MCF 10A (cell line): ENCODE measurements at regions of chr1 and their contacts with region 1.

Region 1: DNA sequence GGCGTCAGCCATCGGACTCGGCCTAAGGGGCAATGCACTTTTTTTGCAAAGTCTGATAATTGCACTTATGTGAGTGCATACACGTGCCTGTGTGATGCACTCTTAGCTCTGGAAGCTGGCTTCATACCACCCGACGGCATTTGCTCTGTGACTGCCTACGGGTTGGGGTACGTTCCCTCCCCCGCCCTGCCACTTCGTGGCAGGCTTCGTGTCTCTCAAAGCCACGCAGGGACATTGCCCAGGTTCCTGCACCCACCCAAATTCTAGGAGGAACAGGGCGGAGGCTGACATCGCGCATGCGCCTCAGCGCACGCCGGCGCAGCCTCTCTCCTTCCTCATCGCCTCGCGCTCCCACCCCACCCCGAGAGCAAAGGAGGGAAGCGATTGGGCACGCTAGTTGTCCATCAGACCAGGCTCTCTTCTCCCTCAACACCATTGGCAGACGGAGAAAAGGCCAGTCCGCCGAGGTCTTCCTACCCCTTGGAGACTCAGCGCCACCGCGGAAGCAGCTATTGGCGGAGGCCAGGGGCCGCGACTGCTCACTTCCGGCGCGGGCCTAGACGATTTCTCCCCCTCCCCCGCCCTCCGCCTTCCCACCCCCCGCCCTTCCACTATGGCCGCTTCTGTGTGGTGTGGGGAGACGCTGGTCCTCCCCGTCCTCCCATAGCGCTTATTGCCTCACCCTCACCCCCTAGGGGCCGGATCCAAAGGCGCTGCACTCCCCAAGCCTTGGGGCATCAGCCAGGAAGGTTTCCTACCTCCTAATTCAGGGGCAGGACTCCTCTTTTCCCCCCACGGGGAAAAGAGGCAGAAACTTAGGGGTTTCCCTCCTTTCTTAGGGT is at the start of gene INTS3:
- DNase-seq: peak; percentile 100
- H3K4me3 Mint-ChIP-seq: peak within 1 kb of the TSS; percentile 99
- H3K27ac Mint-ChIP-seq: peak within 1 kb of the TSS; percentile 98
- H3K4me1 Mint-ChIP-seq: peaks cover 21% of the 10 kb centered on the region
- H3K27me3 Mint-ChIP-seq: no peaks in the 10 kb centered on the region
- CTCF ChIP-seq: no peak
- total RNA-seq, gene INTS3: 68.7 and 88.3 TPM in 2 replicates

Region 2: GRCh38 chr1:153456396-153456795 is 271.3 kb before region 1 on chr1:
- CTCF ChIA-PET with region 1: no interaction called
- POLR2A ChIA-PET with region 1: no interaction called
- intact Hi-C with region 1: no loop called
- DNase-seq: no peak
- H3K4me3 Mint-ChIP-seq: no peak overlapping the region
- H3K27ac Mint-ChIP-seq: no peak overlapping the region
- H3K4me1 Mint-ChIP-seq: no peaks in the 10 kb centered on the region
- H3K27me3 Mint-ChIP-seq: peaks cover 63% of the 10 kb centered on the region
- CTCF ChIP-seq: no peak

Region 3: GRCh38 chr1:153677718-153678505 is 49.8 kb before region 1 on chr1:
- CTCF ChIA-PET with region 1: interaction called, 12 read pairs
- POLR2A ChIA-PET with region 1: interaction called, 5 read pairs
- intact Hi-C with region 1: loop called (anchors 5 kb)
- DNase-seq: peak; percentile 66
- H3K4me3 Mint-ChIP-seq: peak overlapping the region; percentile 73
- H3K27ac Mint-ChIP-seq: no peak overlapping the region
- H3K4me1 Mint-ChIP-seq: peaks cover 7% of the 10 kb centered on the region
- H3K27me3 Mint-ChIP-seq: peaks cover 41% of the 10 kb centered on the region
- CTCF ChIP-seq: peak; percentile 98

Region 4: GRCh38 chr1:153698020-153698931 is 29.4 kb before region 1 on chr1:
- CTCF ChIA-PET with region 1: interaction called, 3 read pairs
- POLR2A ChIA-PET with region 1: interaction called, 11 read pairs
- intact Hi-C with region 1: no loop called
- DNase-seq: no peak
- H3K4me3 Mint-ChIP-seq: no peak overlapping the region
- H3K27ac Mint-ChIP-seq: no peak overlapping the region
- H3K4me1 Mint-ChIP-seq: peaks cover 17% of the 10 kb centered on the region
- H3K27me3 Mint-ChIP-seq: no peaks in the 10 kb centered on the region
- CTCF ChIP-seq: no peak

Region 5: DNA sequence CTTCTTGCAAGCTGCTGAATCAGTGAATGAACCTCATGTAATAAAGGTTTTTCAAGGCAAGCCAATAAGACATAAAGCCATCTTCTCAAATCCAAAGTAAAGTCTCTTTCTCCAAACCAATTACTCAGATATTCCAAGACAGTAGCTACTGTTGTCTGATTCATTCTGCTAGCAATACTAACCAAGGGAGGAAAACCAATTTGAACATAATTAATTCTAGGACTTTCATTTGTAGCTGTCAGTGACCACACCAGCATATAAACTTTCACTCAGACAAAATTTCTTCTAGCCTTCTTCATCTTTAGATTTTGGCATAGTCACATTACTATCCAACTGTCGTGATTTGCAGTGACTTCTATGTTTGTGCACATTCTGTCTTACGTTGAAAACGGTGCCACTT is 10.4 kb before region 1 on chr1:
- CTCF ChIA-PET with region 1: interaction called, 6 read pairs
- POLR2A ChIA-PET with region 1: interaction called, 35 read pairs
- intact Hi-C with region 1: no loop called
- DNase-seq: no peak
- H3K4me3 Mint-ChIP-seq: no peak overlapping the region
- H3K27ac Mint-ChIP-seq: no peak overlapping the region
- H3K4me1 Mint-ChIP-seq: no peaks in the 10 kb centered on the region
- H3K27me3 Mint-ChIP-seq: no peaks in the 10 kb centered on the region
- CTCF ChIP-seq: no peak

Region 6: DNA sequence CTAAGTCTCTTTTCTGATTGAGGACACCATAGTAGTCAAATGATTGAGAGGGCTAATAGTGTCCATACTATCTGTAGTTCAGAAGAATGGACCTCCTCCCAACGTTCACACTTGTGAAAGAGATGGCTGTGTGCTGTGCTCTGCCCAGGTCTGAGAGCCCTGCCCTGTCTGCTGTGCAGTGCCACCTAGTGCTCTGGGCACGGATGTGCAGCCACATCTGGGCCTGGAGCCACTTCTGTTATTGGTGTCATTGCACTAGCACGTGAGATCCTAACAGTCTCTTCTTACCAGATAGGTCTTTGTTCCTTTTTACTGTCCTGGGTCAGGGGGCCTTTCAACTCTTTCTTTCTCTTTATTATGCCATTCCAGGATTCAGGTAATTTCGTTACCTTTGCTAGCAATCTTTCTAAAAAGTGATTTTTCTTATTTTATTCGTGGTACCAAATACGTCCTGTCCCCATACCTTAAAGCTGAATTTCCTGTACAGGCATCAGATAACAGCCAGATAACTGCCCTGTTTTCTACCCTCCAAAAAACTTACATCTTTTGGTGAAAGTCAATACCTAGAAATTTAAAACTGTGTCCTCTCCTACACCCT is 21.8 kb after region 1 on chr1:
- CTCF ChIA-PET with region 1: interaction called, 14 read pairs
- POLR2A ChIA-PET with region 1: interaction called, 12 read pairs
- intact Hi-C with region 1: no loop called
- DNase-seq: peak; percentile 89
- H3K4me3 Mint-ChIP-seq: no peak overlapping the region
- H3K27ac Mint-ChIP-seq: no peak overlapping the region
- H3K4me1 Mint-ChIP-seq: peaks cover 5% of the 10 kb centered on the region
- H3K27me3 Mint-ChIP-seq: no peaks in the 10 kb centered on the region
- CTCF ChIP-seq: peak; percentile 98

Region 7: GRCh38 chr1:153775458-153776327 is 48.0 kb after region 1 on chr1:
- CTCF ChIA-PET with region 1: no interaction called
- POLR2A ChIA-PET with region 1: interaction called, 21 read pairs
- intact Hi-C with region 1: no loop called
- DNase-seq: peak; percentile 81
- H3K4me3 Mint-ChIP-seq: peak overlapping the region; percentile 70
- H3K27ac Mint-ChIP-seq: peak overlapping the region; percentile 68
- H3K4me1 Mint-ChIP-seq: peaks cover 36% of the 10 kb centered on the region
- H3K27me3 Mint-ChIP-seq: no peaks in the 10 kb centered on the region
- CTCF ChIP-seq: no peak